Naive thymus-derived CD4-positive, alpha-beta T cell (primary cell): ENCODE measurements at regions of chr7 and their contacts with region 1.

Region 1: GRCh38 chr7:876167-876967 is at the start of gene GET4:
- DNase-seq: peak; percentile 97 to 100 (median 99)
- ATAC-seq: peak; percentile 90
- H3K4me3 ChIP-seq: peak within 1 kb of the TSS; percentile 65
- H3K4me3 Mint-ChIP-seq: peak within 1 kb of the TSS; percentile 79 to 98 (median 90)
- H3K27ac ChIP-seq: peak within 1 kb of the TSS; percentile 95
- H3K27ac Mint-ChIP-seq: peak within 1 kb of the TSS; percentile 57 to 94 (median 90)
- H3K4me1 ChIP-seq: peaks cover 14 to 33% of the 10 kb centered on the region in 2 donors
- H3K4me1 Mint-ChIP-seq: peaks cover 11 to 42% (median 31%) of the 10 kb centered on the region in 7 donors
- H3K27me3 ChIP-seq: no peaks in the 10 kb centered on the region
- H3K27me3 Mint-ChIP-seq: no peaks in the 10 kb centered on the region
- total RNA-seq, gene GET4: 42.6 to 82.1 (median 52.6) TPM

Region 2: GRCh38 chr7:322111-322671 is 554.2 kb before region 1 on chr7:
- CTCF ChIA-PET with region 1: no interaction called
- POLR2A ChIA-PET with region 1: interaction called, 3 read pairs
- intact Hi-C with region 1: loop called (anchors 1 kb)
- DNase-seq: peak; percentile 74 to 98 (median 85)
- ATAC-seq: peak; percentile 100
- H3K4me3 ChIP-seq: no peak overlapping the region
- H3K4me3 Mint-ChIP-seq: no peak overlapping the region
- H3K27ac ChIP-seq: no peak overlapping the region
- H3K27ac Mint-ChIP-seq: no peak overlapping the region
- H3K4me1 ChIP-seq: no peaks in the 10 kb centered on the region
- H3K4me1 Mint-ChIP-seq: peaks cover 0 to 6% (median 0%) of the 10 kb centered on the region in 7 donors
- H3K27me3 ChIP-seq: no peaks in the 10 kb centered on the region
- H3K27me3 Mint-ChIP-seq: peaks cover 15 to 36% (median 23%) of the 10 kb centered on the region in 5 donors

Region 3: GRCh38 chr7:712381-713138 is 163.8 kb before region 1 on chr7:
- CTCF ChIA-PET with region 1: no interaction called
- POLR2A ChIA-PET with region 1: interaction called, 3 read pairs
- intact Hi-C with region 1: loop called in 1 of 2 experiments (anchors 5 kb)
- DNase-seq: peak in 4 of 9 donors; percentile 28 to 43 (median 42)
- ATAC-seq: peak; percentile 75
- H3K4me3 ChIP-seq: peak overlapping the region; percentile 24
- H3K4me3 Mint-ChIP-seq: peak overlapping the region in 9 of 10 donors; percentile 9 to 86 (median 68)
- H3K27ac ChIP-seq: peak overlapping the region; percentile 62
- H3K27ac Mint-ChIP-seq: peak overlapping the region in 6 of 9 donors; percentile 53 to 87 (median 82)
- H3K4me1 ChIP-seq: peaks cover 0 to 5% of the 10 kb centered on the region in 2 donors
- H3K4me1 Mint-ChIP-seq: peaks cover 5 to 34% (median 15%) of the 10 kb centered on the region in 7 donors
- H3K27me3 ChIP-seq: no peaks in the 10 kb centered on the region
- H3K27me3 Mint-ChIP-seq: peaks cover 0 to 5% (median 0%) of the 10 kb centered on the region in 5 donors

Region 4: DNA sequence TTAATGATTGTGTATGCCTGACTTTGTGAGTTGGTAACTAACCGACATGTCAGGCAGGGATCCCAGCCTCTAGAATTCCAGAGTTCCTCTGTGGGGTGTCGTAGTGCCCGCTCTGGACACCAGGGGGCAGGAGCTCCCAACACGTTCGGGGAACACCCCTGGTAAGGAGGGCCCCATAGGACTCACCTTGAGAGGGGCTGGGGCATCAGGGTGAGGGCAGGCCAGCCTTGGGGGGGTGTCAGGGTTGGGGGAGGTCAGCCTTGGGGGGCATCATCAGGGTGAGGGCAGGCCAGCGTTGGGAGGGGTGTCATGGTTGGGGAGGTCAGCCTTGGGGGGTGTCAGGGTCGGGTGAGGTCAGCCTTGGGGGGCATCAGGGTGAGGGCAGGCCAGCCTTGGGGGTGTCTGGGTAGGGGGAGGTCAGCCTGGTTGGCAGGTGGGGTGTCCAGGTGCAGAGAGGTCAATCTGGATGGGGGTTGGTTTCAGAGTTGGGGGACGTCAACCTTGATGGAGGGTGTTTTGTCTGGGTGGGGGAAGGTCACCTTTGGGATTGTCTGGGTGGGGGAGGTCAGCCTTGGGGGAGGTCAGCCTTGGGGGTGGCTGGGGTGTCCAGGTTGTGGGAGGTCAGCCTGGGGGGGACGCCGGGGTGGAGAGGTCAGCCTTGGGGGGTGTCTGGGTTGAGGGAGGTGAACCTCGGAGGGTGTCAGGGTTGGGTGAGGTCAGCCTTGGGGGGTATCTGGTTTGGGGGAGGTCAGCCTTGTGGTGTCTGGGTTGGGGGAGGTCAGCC is 89.7 kb before region 1 on chr7:
- CTCF ChIA-PET with region 1: interaction called, 59 read pairs
- POLR2A ChIA-PET with region 1: interaction called, 3 read pairs
- intact Hi-C with region 1: loop called in 1 of 2 experiments (anchors 1 kb)
- DNase-seq: peak; percentile 44 to 77 (median 63)
- ATAC-seq: peak; percentile 91
- H3K4me3 ChIP-seq: no peak overlapping the region
- H3K4me3 Mint-ChIP-seq: no peak overlapping the region
- H3K27ac ChIP-seq: no peak overlapping the region
- H3K27ac Mint-ChIP-seq: peak overlapping the region in 1 of 9 donors; percentile 15
- H3K4me1 ChIP-seq: no peaks in the 10 kb centered on the region
- H3K4me1 Mint-ChIP-seq: peaks cover 0 to 2% (median 0%) of the 10 kb centered on the region in 7 donors
- H3K27me3 ChIP-seq: no peaks in the 10 kb centered on the region
- H3K27me3 Mint-ChIP-seq: no peaks in the 10 kb centered on the region

Region 5: DNA sequence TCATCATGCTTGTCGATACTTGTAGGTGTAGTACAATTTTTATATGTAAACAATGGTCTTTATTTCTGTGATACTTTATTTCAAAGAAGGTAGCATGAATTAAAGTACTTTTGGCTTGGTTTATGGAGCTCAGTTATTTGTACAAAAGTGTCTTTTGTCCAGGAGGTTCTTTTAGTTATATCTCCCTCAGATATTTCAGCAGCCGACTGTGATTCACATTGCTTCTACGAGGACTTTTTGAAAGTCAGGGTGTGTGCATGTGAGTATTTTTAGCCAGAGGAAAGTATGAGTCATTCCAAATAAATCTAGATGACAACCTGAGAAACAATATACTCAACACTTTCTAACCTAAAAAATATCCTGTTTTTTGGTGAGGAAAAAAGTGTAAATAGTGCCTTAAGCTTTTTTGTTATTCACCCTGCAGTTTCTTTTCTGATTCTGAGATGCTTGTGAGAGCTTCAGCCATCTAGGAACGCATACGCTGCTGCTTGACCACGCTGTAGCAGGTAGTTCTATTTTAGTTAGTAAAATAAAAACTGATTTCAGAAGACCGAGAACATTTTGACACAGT is 44.7 kb before region 1 on chr7:
- CTCF ChIA-PET with region 1: interaction called, 10 read pairs
- POLR2A ChIA-PET with region 1: no interaction called
- intact Hi-C with region 1: loop called (anchors 1 kb)
- DNase-seq: peak in 3 of 9 donors; percentile 19 to 49 (median 26)
- ATAC-seq: peak; percentile 13
- H3K4me3 ChIP-seq: peak overlapping the region; percentile 12
- H3K4me3 Mint-ChIP-seq: peak overlapping the region; percentile 64 to 89 (median 84)
- H3K27ac ChIP-seq: peak overlapping the region; percentile 83
- H3K27ac Mint-ChIP-seq: peak overlapping the region; percentile 86 to 98 (median 94)
- H3K4me1 ChIP-seq: peaks cover 23 to 36% of the 10 kb centered on the region in 2 donors
- H3K4me1 Mint-ChIP-seq: peaks cover 38 to 67% (median 57%) of the 10 kb centered on the region in 7 donors
- H3K27me3 ChIP-seq: no peaks in the 10 kb centered on the region
- H3K27me3 Mint-ChIP-seq: no peaks in the 10 kb centered on the region

Region 6: GRCh38 chr7:974820-975681 is 98.7 kb after region 1 on chr7 and contains the start of gene COX19:
- CTCF ChIA-PET with region 1: no interaction called
- POLR2A ChIA-PET with region 1: interaction called, 10 read pairs
- intact Hi-C with region 1: loop called (anchors 1 kb)
- DNase-seq: peak; percentile 82 to 92 (median 87)
- ATAC-seq: peak; percentile 98
- H3K4me3 ChIP-seq: peak within 1 kb of the TSS; percentile 95
- H3K4me3 Mint-ChIP-seq: peak within 1 kb of the TSS; percentile 86 to 96 (median 92)
- H3K27ac ChIP-seq: peak within 1 kb of the TSS; percentile 98
- H3K27ac Mint-ChIP-seq: peak within 1 kb of the TSS; percentile 59 to 94 (median 89)
- H3K4me1 ChIP-seq: peaks cover 14 to 20% of the 10 kb centered on the region in 2 donors
- H3K4me1 Mint-ChIP-seq: peaks cover 12 to 36% (median 25%) of the 10 kb centered on the region in 7 donors
- H3K27me3 ChIP-seq: no peaks in the 10 kb centered on the region
- H3K27me3 Mint-ChIP-seq: no peaks in the 10 kb centered on the region
- total RNA-seq, gene COX19: 18.3 to 48.2 (median 46.1) TPM

Region 7: DNA sequence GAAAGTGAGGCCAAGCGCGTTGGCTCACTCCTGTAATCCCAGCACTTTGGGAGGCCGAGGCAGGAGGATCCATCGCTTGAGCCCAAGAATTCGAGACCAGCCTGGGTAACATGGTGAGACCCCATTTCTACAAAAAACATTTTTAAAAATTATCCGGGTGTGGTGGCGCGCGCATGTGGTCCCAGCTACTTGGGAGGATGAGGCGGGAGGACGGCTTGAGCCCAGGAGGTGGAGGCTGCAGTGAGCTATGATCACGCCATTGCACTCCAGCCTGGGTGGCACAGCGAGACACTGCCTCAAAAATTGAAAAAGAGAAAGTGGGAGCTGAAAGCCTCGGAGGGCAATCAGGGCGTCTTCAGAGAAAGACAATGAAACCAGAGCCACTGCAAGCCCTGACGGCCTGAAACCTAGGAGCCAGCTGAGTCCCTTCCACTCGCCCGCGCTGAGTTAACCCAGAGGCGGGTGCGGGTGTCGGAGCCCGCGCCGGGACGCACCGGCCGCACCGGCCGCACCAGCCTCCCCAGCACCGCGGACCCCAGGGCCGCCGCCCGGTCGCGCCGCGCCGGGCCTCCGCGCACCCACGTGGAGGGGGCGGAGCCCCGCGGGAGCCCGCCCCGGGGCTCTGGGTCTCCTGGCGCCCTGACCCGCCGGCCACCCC is 261.3 kb after region 1 on chr7:
- CTCF ChIA-PET with region 1: no interaction called
- POLR2A ChIA-PET with region 1: interaction called, 3 read pairs
- intact Hi-C with region 1: loop called in 1 of 2 experiments (anchors 2 kb)
- DNase-seq: no peak
- ATAC-seq: peak; percentile 82
- H3K4me3 ChIP-seq: peak overlapping the region; percentile 83
- H3K4me3 Mint-ChIP-seq: peak overlapping the region; percentile 74 to 94 (median 91)
- H3K27ac ChIP-seq: peak overlapping the region; percentile 82
- H3K27ac Mint-ChIP-seq: peak overlapping the region; percentile 51 to 94 (median 86)
- H3K4me1 ChIP-seq: peaks cover 7 to 13% of the 10 kb centered on the region in 2 donors
- H3K4me1 Mint-ChIP-seq: peaks cover 8 to 19% (median 16%) of the 10 kb centered on the region in 7 donors
- H3K27me3 ChIP-seq: no peaks in the 10 kb centered on the region
- H3K27me3 Mint-ChIP-seq: no peaks in the 10 kb centered on the region